ENCODE measurements at regions of chr5 and their contacts with region 1.

Region 1: GRCh38 chr5:136080483-136081216 is 51.9 kb downstream of the TGFBI start:
- DNase-seq: peak; percentile 43 to 85
- ATAC-seq: peak; percentile 62 to 63
- H3K4me3 ChIP-seq: peak overlapping the region; percentile 30
- H3K27ac ChIP-seq: peak overlapping the region; percentile 80 to 89
- H3K4me1 ChIP-seq: peaks cover 27% of the 10 kb centered on the region
- CTCF ChIP-seq: no peak
- EP300 ChIP-seq: no peak
- POLR2A ChIP-seq: peak; percentile 45
- RAD21 ChIP-seq: no peak

Region 2: GRCh38 chr5:135887351-135887864 is 193.2 kb before region 1 on chr5:
- CTCF ChIA-PET with region 1: interaction called, 74 read pairs
- POLR2A ChIA-PET with region 1: no interaction called
- DNase-seq: peak; percentile 74 to 78
- ATAC-seq: peak; percentile 92 to 97
- H3K4me3 ChIP-seq: no peak overlapping the region
- H3K27ac ChIP-seq: peak overlapping the region; percentile 9 to 65; a peak in 4 of 6 replicates
- H3K4me1 ChIP-seq: peaks cover 22% of the 10 kb centered on the region
- CTCF ChIP-seq: peak; percentile 98
- EP300 ChIP-seq: no peak
- POLR2A ChIP-seq: no peak
- RAD21 ChIP-seq: peak; percentile 97 to 98

Region 3: DNA sequence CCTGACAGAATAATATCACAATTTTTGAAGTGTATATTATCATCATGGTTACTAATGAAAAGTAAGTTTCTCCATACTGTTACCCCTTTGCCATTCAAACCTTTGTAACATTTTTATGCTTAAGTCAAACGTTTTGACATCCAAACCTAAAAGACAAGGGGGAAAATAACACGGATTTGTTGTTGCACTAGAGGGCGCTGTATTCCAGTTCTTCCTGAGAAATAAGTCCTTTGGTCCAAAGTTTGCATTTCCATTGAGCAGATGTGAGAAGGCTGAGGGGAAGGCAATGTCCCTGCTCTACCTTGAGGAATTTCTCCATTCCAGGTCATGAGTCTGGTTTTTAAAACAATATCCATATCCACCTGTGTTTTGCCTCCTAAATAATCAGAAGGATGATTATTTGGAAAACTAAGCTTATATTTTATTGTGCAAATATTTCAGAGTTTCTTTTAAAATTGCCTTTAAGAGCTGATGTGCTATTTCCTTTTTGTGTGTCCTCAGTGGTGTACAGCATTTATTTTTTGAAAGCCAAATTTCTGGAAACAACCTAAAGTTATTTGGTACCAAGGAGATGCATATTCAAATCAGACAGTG is 135.6 kb before region 1 on chr5:
- CTCF ChIA-PET with region 1: interaction called, 27 read pairs
- POLR2A ChIA-PET with region 1: no interaction called
- DNase-seq: peak; percentile 44 to 89
- ATAC-seq: peak; percentile 74 to 89; a peak in 5 of 6 replicates
- H3K4me3 ChIP-seq: no peak overlapping the region
- H3K27ac ChIP-seq: peak overlapping the region; percentile 55 to 63
- H3K4me1 ChIP-seq: peaks cover 15% of the 10 kb centered on the region
- CTCF ChIP-seq: peak; percentile 93
- EP300 ChIP-seq: no peak
- POLR2A ChIP-seq: no peak
- RAD21 ChIP-seq: peak; percentile 94 to 96

Region 4: DNA sequence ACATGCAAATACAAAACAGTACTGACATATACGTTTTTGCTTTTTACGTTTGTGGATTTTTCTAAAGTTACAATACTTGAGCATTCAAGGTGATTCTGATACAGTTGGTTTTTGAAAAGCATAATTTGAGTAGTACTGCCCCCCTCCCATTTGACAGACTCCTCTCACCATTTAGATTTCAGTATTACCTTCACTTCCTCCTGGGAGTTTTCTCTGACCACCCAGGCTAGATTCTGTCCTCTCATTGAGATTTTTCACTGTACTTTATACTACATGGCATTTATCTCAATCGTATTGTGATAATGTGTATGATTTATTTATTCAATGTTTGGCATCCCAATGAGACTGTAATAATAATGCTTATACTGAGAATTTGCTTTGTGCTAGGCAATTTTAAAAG is 19.2 kb after region 1 on chr5:
- CTCF ChIA-PET with region 1: interaction called, 15 read pairs
- POLR2A ChIA-PET with region 1: no interaction called
- DNase-seq: no peak
- ATAC-seq: no peak
- H3K4me3 ChIP-seq: no peak overlapping the region
- H3K27ac ChIP-seq: no peak overlapping the region
- H3K4me1 ChIP-seq: peaks cover 3% of the 10 kb centered on the region
- CTCF ChIP-seq: no peak
- EP300 ChIP-seq: no peak
- POLR2A ChIP-seq: no peak
- RAD21 ChIP-seq: no peak

Region 5: GRCh38 chr5:136155761-136156160 is 75.1 kb after region 1 on chr5:
- CTCF ChIA-PET with region 1: no interaction called
- POLR2A ChIA-PET with region 1: no interaction called
- DNase-seq: no peak
- ATAC-seq: no peak
- H3K4me3 ChIP-seq: no peak overlapping the region
- H3K27ac ChIP-seq: no peak overlapping the region
- H3K4me1 ChIP-seq: peaks cover 13% of the 10 kb centered on the region
- CTCF ChIP-seq: no peak
- EP300 ChIP-seq: no peak
- POLR2A ChIP-seq: no peak
- RAD21 ChIP-seq: no peak

Region 6: GRCh38 chr5:136174021-136174659 is 93.5 kb after region 1 on chr5:
- CTCF ChIA-PET with region 1: interaction called, 17 read pairs
- POLR2A ChIA-PET with region 1: no interaction called
- DNase-seq: peak; percentile 55 to 72
- ATAC-seq: peak; percentile 96 to 97
- H3K4me3 ChIP-seq: no peak overlapping the region
- H3K27ac ChIP-seq: no peak overlapping the region
- H3K4me1 ChIP-seq: no peaks in the 10 kb centered on the region
- CTCF ChIP-seq: peak; percentile 88
- EP300 ChIP-seq: no peak
- POLR2A ChIP-seq: no peak
- RAD21 ChIP-seq: peak; percentile 81 to 82

Region 7: GRCh38 chr5:136563489-136563888 is 482.8 kb after region 1 on chr5:
- CTCF ChIA-PET with region 1: no interaction called
- POLR2A ChIA-PET with region 1: no interaction called
- DNase-seq: no peak
- ATAC-seq: no peak
- H3K4me3 ChIP-seq: no peak overlapping the region
- H3K27ac ChIP-seq: no peak overlapping the region
- H3K4me1 ChIP-seq: no peaks in the 10 kb centered on the region
- CTCF ChIP-seq: no peak
- EP300 ChIP-seq: no peak
- POLR2A ChIP-seq: no peak
- RAD21 ChIP-seq: no peak

Measured in A549 (cell line).